GM12878 (cell line): ENCODE measurements at regions of chr19 and their contacts with region 1.

Region 1: GRCh38 chr19:10380313-10381102 is at the start of gene TYK2:
- DNase-seq: peak; percentile 99
- ATAC-seq: peak; percentile 97
- H3K4me3 ChIP-seq: peak within 1 kb of the TSS; percentile 95
- H3K27ac ChIP-seq: peak within 1 kb of the TSS; percentile 87
- H3K4me1 ChIP-seq: peaks cover 10% of the 10 kb centered on the region
- H3K27me3 ChIP-seq: no peaks in the 10 kb centered on the region
- CTCF ChIP-seq: no peak
- EP300 ChIP-seq: peak; percentile 6 to 55; a peak in 3 of 4 replicates
- POLR2A ChIP-seq: peak; percentile 92
- RAD21 ChIP-seq: no peak
- polyA plus RNA-seq, gene TYK2: 36.4 to 66.9 TPM

Region 2: GRCh38 chr19:10259162-10259905 is 121.2 kb before region 1 on chr19:
- CTCF ChIA-PET with region 1: interaction called, 370 read pairs
- POLR2A ChIA-PET with region 1: interaction called, 4 read pairs
- RAD21 ChIA-PET with region 1: interaction called, 107 read pairs
- SMC1A ChIA-PET with region 1: interaction called, 6 read pairs
- in situ Hi-C with region 1: no loop called
- intact Hi-C with region 1: no loop called
- DNase-seq: no peak
- ATAC-seq: peak; percentile 91
- H3K4me3 ChIP-seq: no peak overlapping the region
- H3K27ac ChIP-seq: 0 out of 2 replicates have a peak overlapping the region, but pooled peaks have one; percentile 27
- H3K4me1 ChIP-seq: peaks cover 11% of the 10 kb centered on the region
- H3K27me3 ChIP-seq: no peaks in the 10 kb centered on the region
- CTCF ChIP-seq: peak; percentile 71 to 75 (median 73)
- EP300 ChIP-seq: no peak
- POLR2A ChIP-seq: peak; percentile 72
- RAD21 ChIP-seq: peak; percentile 74

Region 3: GRCh38 chr19:10368101-10368803 is 12.3 kb before region 1 on chr19:
- CTCF ChIA-PET with region 1: interaction called, 3 read pairs
- POLR2A ChIA-PET with region 1: interaction called, 7 read pairs
- RAD21 ChIA-PET with region 1: interaction called, 6 read pairs
- SMC1A ChIA-PET with region 1: interaction called, 10 read pairs
- in situ Hi-C with region 1: no loop called
- intact Hi-C with region 1: no loop called
- DNase-seq: no peak
- ATAC-seq: peak; percentile 49; the same call in 2 of the 3 replicates
- H3K4me3 ChIP-seq: no peak overlapping the region
- H3K27ac ChIP-seq: no peak overlapping the region
- H3K4me1 ChIP-seq: no peaks in the 10 kb centered on the region
- H3K27me3 ChIP-seq: no peaks in the 10 kb centered on the region
- CTCF ChIP-seq: no peak
- EP300 ChIP-seq: no peak
- POLR2A ChIP-seq: no peak
- RAD21 ChIP-seq: no peak